ENCODE measurements at regions of chr17 and their contacts with region 1.

Region 1: DNA sequence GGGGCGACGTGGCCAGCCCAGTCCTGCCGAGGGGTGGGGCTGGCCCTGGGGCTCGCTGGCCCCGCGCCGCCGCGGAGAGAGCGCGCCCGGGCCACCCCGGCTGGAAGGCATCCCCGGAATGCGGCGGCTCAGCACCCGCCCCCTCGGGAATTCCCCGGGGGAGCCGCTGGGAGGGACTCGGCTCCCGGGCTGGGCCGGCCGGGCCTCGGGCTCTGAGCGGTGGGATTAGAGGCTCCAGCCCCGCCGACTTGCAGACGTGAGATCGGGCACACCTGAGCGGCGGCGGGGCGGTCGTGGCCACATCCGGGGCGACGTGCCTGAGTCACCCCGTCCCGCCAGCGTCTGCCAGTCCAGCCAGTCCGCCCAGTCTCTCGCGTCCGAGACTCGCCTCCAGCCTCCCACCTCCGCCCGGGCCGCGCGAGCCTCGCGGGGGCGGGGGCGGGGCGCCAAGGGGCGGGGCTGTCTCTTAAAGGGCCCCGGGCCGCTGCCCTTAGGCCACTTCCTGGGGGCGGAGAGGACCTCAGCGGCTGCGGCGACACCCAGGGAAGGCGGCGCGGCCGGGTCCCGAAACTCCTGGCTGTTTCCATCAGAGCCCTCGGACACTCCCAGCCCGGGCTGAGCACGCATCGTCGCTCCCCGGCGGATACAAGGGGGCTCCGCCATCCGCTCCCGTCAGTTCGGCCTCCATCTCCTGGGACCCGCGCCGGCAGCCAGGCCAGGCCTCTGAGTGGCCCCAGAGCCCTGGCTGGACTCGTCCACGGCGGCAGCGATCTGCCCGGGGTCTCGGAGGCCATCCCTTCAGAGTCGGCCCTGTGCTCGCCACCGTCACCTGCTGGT is at the start of gene KCTD11:
- DNase-seq: peak; percentile 40 to 88 (median 58)
- ATAC-seq: peak; percentile 72
- H3K4me3 ChIP-seq: peak within 1 kb of the TSS; percentile 57
- H3K4me3 Mint-ChIP-seq: peak within 1 kb of the TSS; percentile 78 to 94 (median 88)
- H3K27ac ChIP-seq: peak within 1 kb of the TSS; percentile 74
- H3K27ac Mint-ChIP-seq: peak within 1 kb of the TSS; percentile 72 to 91 (median 86)
- H3K4me1 ChIP-seq: peaks cover 10 to 27% of the 10 kb centered on the region in 2 donors
- H3K4me1 Mint-ChIP-seq: peaks cover 14 to 62% (median 43%) of the 10 kb centered on the region in 7 donors
- H3K27me3 ChIP-seq: no peaks in the 10 kb centered on the region
- H3K27me3 Mint-ChIP-seq: no peaks in the 10 kb centered on the region
- total RNA-seq, gene KCTD11: 2.7 to 13.7 (median 4.0) TPM

Region 2: DNA sequence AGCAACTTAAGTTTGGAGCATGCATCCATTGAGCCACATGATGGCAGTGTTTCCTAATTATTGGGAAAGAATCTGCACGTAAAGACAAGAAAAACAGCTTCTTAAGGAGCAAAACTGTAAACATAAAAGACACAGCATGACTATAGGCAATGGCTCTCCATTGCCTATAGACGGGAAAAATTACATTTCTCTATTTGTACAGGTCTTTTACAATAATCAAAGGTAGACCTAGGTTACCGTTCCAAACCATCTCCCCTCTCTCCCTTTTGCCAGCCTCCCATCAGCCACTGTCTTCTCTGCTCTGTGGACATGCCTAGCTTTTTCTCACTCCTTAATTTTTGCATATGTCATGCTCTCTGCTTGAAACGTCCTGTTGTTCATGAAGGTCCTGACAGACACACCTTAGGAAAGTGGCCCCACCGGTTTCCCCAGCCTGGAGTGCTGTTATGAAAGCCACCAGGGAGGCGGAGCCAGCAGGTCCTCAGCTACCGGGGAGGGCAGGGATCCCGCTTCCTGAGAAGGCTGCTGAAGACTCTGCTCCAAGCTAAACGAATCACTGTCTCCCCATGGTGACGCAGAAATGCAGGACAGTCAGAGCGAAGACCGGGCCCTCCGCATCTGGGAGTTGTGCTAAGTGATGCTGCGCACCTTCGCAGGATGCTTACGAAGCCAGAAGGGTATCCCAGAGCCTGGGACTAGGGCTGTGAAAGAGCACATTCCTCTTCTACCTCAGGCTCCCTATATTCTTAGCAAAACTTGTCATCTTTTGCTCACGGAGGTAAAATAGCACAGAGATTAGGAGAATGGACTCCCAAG is 305.8 kb before region 1 on chr17:
- CTCF ChIA-PET with region 1: no interaction called
- POLR2A ChIA-PET with region 1: no interaction called
- intact Hi-C with region 1: loop called in 1 of 2 experiments (anchors 5 kb)
- DNase-seq: peak in 8 of 9 donors; percentile 48 to 79 (median 69)
- ATAC-seq: peak; percentile 58
- H3K4me3 ChIP-seq: peak overlapping the region; percentile 66
- H3K4me3 Mint-ChIP-seq: peak overlapping the region; percentile 78 to 91 (median 86)
- H3K27ac ChIP-seq: peak overlapping the region; percentile 74
- H3K27ac Mint-ChIP-seq: peak overlapping the region; percentile 69 to 96 (median 92)
- H3K4me1 ChIP-seq: peaks cover 27 to 30% of the 10 kb centered on the region in 2 donors
- H3K4me1 Mint-ChIP-seq: peaks cover 0 to 53% (median 36%) of the 10 kb centered on the region in 7 donors
- H3K27me3 ChIP-seq: no peaks in the 10 kb centered on the region
- H3K27me3 Mint-ChIP-seq: peaks cover 0 to 36% (median 0%) of the 10 kb centered on the region in 5 donors

Region 3: DNA sequence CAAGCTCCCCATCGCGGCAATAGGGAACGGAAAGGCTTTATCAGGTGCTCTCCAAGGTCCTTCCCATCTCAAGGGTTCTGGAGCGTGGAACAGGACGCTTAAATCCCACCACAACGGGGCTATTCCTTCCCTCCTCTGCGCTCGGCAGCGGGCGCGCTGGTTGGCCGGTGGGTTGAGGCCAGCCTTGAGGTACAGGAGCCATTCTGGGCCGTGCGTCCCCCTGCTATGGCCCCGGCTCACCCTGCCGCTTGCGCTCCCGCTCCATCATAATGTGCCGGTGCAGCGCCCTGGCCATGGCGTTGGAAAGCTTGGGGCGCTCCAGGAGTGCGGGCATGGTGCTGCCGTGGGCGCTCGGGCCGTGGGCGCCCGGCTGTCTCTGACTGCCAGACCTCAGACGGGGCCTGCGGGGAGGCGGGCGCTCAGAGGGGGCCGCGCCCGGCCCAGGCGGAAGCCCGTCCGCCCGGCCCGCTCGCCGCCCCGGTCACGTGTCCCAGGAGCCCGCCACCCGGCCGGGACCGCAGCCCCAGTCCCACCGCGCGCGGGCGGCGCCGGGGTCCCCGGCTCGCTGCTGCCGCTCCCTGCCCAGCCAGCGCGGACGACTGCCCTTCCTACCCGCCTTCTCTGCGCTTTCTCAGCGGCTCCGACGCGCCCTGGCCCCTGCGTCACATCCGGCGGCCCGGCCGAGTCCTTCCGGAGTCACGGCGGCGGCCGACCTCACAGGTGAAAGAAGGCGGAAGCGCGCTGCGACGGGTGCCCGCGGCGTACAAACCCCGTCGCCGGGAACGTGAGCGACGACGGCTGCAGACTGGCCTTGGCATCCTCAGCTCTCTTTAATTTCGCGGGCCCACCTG is 36.9 kb before region 1 on chr17 and contains the start of gene GPS2:
- CTCF ChIA-PET with region 1: interaction called, 3 read pairs
- POLR2A ChIA-PET with region 1: interaction called, 5 read pairs
- intact Hi-C with region 1: loop called in 1 of 2 experiments (anchors 2 kb)
- DNase-seq: peak; percentile 90 to 95 (median 93)
- ATAC-seq: peak; percentile 88
- H3K4me3 ChIP-seq: peak within 1 kb of the TSS; percentile 85
- H3K4me3 Mint-ChIP-seq: peak within 1 kb of the TSS; percentile 85 to 96 (median 90)
- H3K27ac ChIP-seq: peak within 1 kb of the TSS; percentile 87
- H3K27ac Mint-ChIP-seq: peak within 1 kb of the TSS; percentile 85 to 97 (median 95)
- H3K4me1 ChIP-seq: peaks cover 30 to 35% of the 10 kb centered on the region in 2 donors
- H3K4me1 Mint-ChIP-seq: peaks cover 36 to 63% (median 54%) of the 10 kb centered on the region in 7 donors
- H3K27me3 ChIP-seq: no peaks in the 10 kb centered on the region
- H3K27me3 Mint-ChIP-seq: no peaks in the 10 kb centered on the region
- total RNA-seq, gene GPS2: 72.6 to 145 (median 107) TPM

Region 4: GRCh38 chr17:7329374-7329996 is 22.4 kb before region 1 on chr17:
- CTCF ChIA-PET with region 1: interaction called, 53 read pairs
- POLR2A ChIA-PET with region 1: interaction called, 98 read pairs
- intact Hi-C with region 1: loop called (anchors 1 to 2 kb)
- DNase-seq: peak; percentile 84 to 98 (median 98)
- ATAC-seq: peak; percentile 91
- H3K4me3 ChIP-seq: peak overlapping the region; percentile 95
- H3K4me3 Mint-ChIP-seq: peak overlapping the region; percentile 89 to 100 (median 96)
- H3K27ac ChIP-seq: peak overlapping the region; percentile 88
- H3K27ac Mint-ChIP-seq: peak overlapping the region; percentile 93 to 99 (median 97)
- H3K4me1 ChIP-seq: peaks cover 15 to 36% of the 10 kb centered on the region in 2 donors
- H3K4me1 Mint-ChIP-seq: peaks cover 29 to 61% (median 44%) of the 10 kb centered on the region in 7 donors
- H3K27me3 ChIP-seq: no peaks in the 10 kb centered on the region
- H3K27me3 Mint-ChIP-seq: no peaks in the 10 kb centered on the region

Region 5: DNA sequence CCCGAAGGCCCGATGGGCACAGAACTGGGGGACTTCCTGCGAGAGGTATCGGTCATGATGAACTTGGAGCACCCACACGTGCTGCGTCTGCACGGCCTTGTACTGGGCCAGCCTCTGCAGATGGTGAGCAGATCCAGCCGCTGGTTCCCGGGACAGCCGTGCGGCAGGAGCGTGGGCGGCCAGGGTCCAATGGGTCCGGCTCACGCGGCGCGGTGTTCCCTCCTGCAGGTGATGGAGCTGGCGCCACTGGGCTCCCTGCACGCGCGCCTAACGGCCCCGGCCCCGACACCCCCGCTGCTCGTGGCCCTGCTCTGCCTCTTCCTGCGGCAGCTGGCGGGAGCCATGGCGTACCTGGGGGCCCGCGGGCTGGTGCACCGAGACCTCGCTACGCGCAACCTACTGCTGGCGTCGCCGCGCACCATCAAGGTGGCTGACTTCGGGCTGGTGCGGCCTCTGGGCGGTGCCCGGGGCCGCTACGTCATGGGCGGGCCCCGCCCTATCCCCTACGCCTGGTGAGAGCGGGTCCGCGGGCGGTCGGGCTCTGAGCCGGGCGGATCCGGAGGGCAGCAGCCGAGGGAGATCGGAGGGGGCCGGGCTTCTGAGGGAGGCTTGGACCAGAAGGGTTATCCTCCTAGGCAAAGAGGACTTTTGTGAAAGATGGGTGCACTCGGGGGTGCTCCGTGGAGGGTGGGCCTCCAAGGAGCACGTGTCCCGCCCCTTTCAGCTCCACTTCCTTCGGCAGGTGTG is 32.0 kb after region 1 on chr17:
- CTCF ChIA-PET with region 1: interaction called, 5 read pairs
- POLR2A ChIA-PET with region 1: interaction called, 8 read pairs
- intact Hi-C with region 1: loop called in 1 of 2 experiments (anchors 2 kb)
- DNase-seq: peak; percentile 74 to 88 (median 86)
- ATAC-seq: peak; percentile 98
- H3K4me3 ChIP-seq: peak overlapping the region; percentile 82
- H3K4me3 Mint-ChIP-seq: peak overlapping the region; percentile 74 to 89 (median 82)
- H3K27ac ChIP-seq: peak overlapping the region; percentile 94
- H3K27ac Mint-ChIP-seq: peak overlapping the region; percentile 73 to 96 (median 94)
- H3K4me1 ChIP-seq: peaks cover 10 to 13% of the 10 kb centered on the region in 2 donors
- H3K4me1 Mint-ChIP-seq: peaks cover 10 to 23% (median 15%) of the 10 kb centered on the region in 7 donors
- H3K27me3 ChIP-seq: peaks cover 0 to 11% of the 10 kb centered on the region in 2 donors
- H3K27me3 Mint-ChIP-seq: peaks cover 27 to 37% (median 33%) of the 10 kb centered on the region in 5 donors

Region 6: GRCh38 chr17:7416323-7416722 is 64.4 kb after region 1 on chr17:
- CTCF ChIA-PET with region 1: interaction called, 7 read pairs
- POLR2A ChIA-PET with region 1: no interaction called
- intact Hi-C with region 1: loop called in 1 of 2 experiments (anchors 1 kb)
- DNase-seq: peak in 1 of 9 donors; percentile 12
- ATAC-seq: no peak
- H3K4me3 ChIP-seq: no peak overlapping the region
- H3K4me3 Mint-ChIP-seq: no peak overlapping the region
- H3K27ac ChIP-seq: no peak overlapping the region
- H3K27ac Mint-ChIP-seq: peak overlapping the region in 1 of 9 donors; percentile 6
- H3K4me1 ChIP-seq: no peaks in the 10 kb centered on the region
- H3K4me1 Mint-ChIP-seq: peaks cover 0 to 7% (median 0%) of the 10 kb centered on the region in 7 donors
- H3K27me3 ChIP-seq: no peaks in the 10 kb centered on the region
- H3K27me3 Mint-ChIP-seq: no peaks in the 10 kb centered on the region

Region 7: DNA sequence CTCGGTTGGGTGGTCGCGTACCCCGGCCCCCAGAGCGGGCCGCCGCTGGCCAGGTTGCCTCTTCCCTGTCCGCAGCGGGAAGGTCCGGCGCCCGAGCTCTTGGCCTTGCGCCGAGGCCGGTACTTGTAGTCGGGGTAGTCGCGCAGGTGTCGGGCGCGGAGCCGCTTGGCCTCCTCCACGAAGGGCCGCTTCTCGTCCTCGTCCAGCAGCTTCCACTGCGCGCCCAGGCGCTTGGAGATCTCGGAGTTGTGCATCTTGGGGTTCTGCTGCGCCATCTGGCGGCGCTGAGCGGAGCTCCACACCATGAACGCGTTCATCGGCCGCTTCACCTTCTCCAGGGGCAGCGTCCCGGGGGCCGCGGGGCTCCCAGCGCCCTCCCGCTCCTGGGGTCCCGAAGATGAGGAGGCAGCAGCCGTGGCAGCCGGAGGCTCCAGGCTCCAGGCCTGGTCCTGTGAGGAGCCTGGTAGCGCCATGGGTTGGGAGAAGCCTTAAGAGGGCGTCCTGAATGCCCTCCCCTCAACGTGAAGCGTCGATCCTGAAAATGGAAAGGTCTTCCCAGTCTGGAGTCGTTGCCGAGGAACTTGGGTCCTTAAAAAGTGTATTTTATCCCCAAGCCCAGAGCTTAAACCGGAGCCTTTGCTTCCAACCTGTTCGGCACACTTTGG is 237.5 kb after region 1 on chr17:
- CTCF ChIA-PET with region 1: interaction called, 5 read pairs
- POLR2A ChIA-PET with region 1: no interaction called
- intact Hi-C with region 1: loop called (anchors 1 kb)
- DNase-seq: peak; percentile 54 to 72 (median 63)
- ATAC-seq: peak; percentile 87
- H3K4me3 ChIP-seq: no peak overlapping the region
- H3K4me3 Mint-ChIP-seq: no peak overlapping the region
- H3K27ac ChIP-seq: no peak overlapping the region
- H3K27ac Mint-ChIP-seq: peak overlapping the region in 2 of 9 donors; percentile 13 to 38
- H3K4me1 ChIP-seq: peaks cover 8 to 11% of the 10 kb centered on the region in 2 donors
- H3K4me1 Mint-ChIP-seq: peaks cover 9 to 14% (median 13%) of the 10 kb centered on the region in 7 donors
- H3K27me3 ChIP-seq: no peaks in the 10 kb centered on the region
- H3K27me3 Mint-ChIP-seq: no peaks in the 10 kb centered on the region